ENCODE measurements at regions of chr12 and their contacts with region 1.

Region 1: GRCh38 chr12:30847259-30847658 is 79.3 kb upstream of the TSPAN11 start:
- DNase-seq: peak; percentile 71
- ATAC-seq: no peak
- H3K4me3 ChIP-seq: no peak overlapping the region
- H3K4me3 Mint-ChIP-seq: no peak overlapping the region
- H3K27ac ChIP-seq: no peak overlapping the region
- H3K27ac Mint-ChIP-seq: no peak overlapping the region
- H3K4me1 ChIP-seq: peaks cover 5 to 16% of the 10 kb centered on the region in 2 donors
- H3K4me1 Mint-ChIP-seq: peaks cover 10% of the 10 kb centered on the region
- H3K27me3 ChIP-seq: no peaks in the 10 kb centered on the region
- H3K27me3 Mint-ChIP-seq: peaks cover 8% of the 10 kb centered on the region
- CTCF ChIP-seq: peak; percentile 81

Region 2: GRCh38 chr12:29519585-29520182 is 1327.6 kb before region 1 on chr12:
- CTCF ChIA-PET with region 1: interaction called, 13 read pairs
- POLR2A ChIA-PET with region 1: no interaction called
- intact Hi-C with region 1: loop called (anchors 1 kb)
- DNase-seq: peak; percentile 46
- ATAC-seq: no peak
- H3K4me3 ChIP-seq: no peak overlapping the region
- H3K4me3 Mint-ChIP-seq: no peak overlapping the region
- H3K27ac ChIP-seq: no peak overlapping the region
- H3K27ac Mint-ChIP-seq: no peak overlapping the region
- H3K4me1 ChIP-seq: no peaks in the 10 kb centered on the region
- H3K4me1 Mint-ChIP-seq: no peaks in the 10 kb centered on the region
- H3K27me3 ChIP-seq: no peaks in the 10 kb centered on the region
- H3K27me3 Mint-ChIP-seq: peaks cover 9% of the 10 kb centered on the region
- CTCF ChIP-seq: peak; percentile 70

Region 3: DNA sequence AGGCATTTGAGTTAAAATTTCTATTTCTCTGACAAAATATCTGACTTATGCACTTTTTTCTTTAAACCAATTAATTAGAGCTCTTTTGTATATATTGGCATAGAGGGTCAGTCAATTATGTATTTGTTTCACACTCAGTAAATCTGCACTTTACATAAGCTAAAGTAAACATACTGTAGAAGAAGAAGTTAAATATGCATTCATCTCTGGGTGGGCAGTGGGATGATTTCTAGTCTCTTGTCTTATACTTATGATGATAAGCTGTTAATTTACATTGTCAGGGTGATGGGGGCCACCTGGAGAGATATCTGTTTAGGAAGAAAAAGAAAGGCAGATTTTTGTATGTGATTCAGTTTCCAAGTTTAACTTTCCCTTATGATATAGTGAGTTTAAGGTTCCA is 482.4 kb before region 1 on chr12:
- CTCF ChIA-PET with region 1: no interaction called
- POLR2A ChIA-PET with region 1: no interaction called
- intact Hi-C with region 1: no loop called
- DNase-seq: no peak
- ATAC-seq: no peak
- H3K4me3 ChIP-seq: no peak overlapping the region
- H3K4me3 Mint-ChIP-seq: no peak overlapping the region
- H3K27ac ChIP-seq: no peak overlapping the region
- H3K27ac Mint-ChIP-seq: no peak overlapping the region
- H3K4me1 ChIP-seq: no peaks in the 10 kb centered on the region
- H3K4me1 Mint-ChIP-seq: no peaks in the 10 kb centered on the region
- H3K27me3 ChIP-seq: no peaks in the 10 kb centered on the region
- H3K27me3 Mint-ChIP-seq: no peaks in the 10 kb centered on the region
- CTCF ChIP-seq: no peak

Region 4: GRCh38 chr12:30610711-30611110 is 236.5 kb before region 1 on chr12:
- CTCF ChIA-PET with region 1: no interaction called
- POLR2A ChIA-PET with region 1: no interaction called
- intact Hi-C with region 1: no loop called
- DNase-seq: no peak
- ATAC-seq: no peak
- H3K4me3 ChIP-seq: no peak overlapping the region
- H3K4me3 Mint-ChIP-seq: no peak overlapping the region
- H3K27ac ChIP-seq: no peak overlapping the region
- H3K27ac Mint-ChIP-seq: no peak overlapping the region
- H3K4me1 ChIP-seq: no peaks in the 10 kb centered on the region
- H3K4me1 Mint-ChIP-seq: no peaks in the 10 kb centered on the region
- H3K27me3 ChIP-seq: peaks cover 0 to 4% (median 0%) of the 10 kb centered on the region in 4 experiments
- H3K27me3 Mint-ChIP-seq: peaks cover 4% of the 10 kb centered on the region
- CTCF ChIP-seq: no peak

Region 5: GRCh38 chr12:30754709-30755394 is 92.4 kb before region 1 on chr12 and contains the start of gene CAPRIN2:
- CTCF ChIA-PET with region 1: interaction called, 3 read pairs
- POLR2A ChIA-PET with region 1: no interaction called
- intact Hi-C with region 1: loop called (anchors 1 kb)
- DNase-seq: peak; percentile 95
- ATAC-seq: peak; percentile 88
- H3K4me3 ChIP-seq: peak within 1 kb of the TSS; percentile 49 to 72 (median 71)
- H3K4me3 Mint-ChIP-seq: peak within 1 kb of the TSS; percentile 99
- H3K27ac ChIP-seq: peak within 1 kb of the TSS; percentile 52 to 79
- H3K27ac Mint-ChIP-seq: peak within 1 kb of the TSS; percentile 89
- H3K4me1 ChIP-seq: peaks cover 14 to 15% of the 10 kb centered on the region in 2 donors
- H3K4me1 Mint-ChIP-seq: peaks cover 23% of the 10 kb centered on the region
- H3K27me3 ChIP-seq: no peaks in the 10 kb centered on the region
- H3K27me3 Mint-ChIP-seq: no peaks in the 10 kb centered on the region
- CTCF ChIP-seq: peak; percentile 29
- total RNA-seq, gene CAPRIN2: 55.2 and 57.8 TPM in 2 replicates

Region 6: DNA sequence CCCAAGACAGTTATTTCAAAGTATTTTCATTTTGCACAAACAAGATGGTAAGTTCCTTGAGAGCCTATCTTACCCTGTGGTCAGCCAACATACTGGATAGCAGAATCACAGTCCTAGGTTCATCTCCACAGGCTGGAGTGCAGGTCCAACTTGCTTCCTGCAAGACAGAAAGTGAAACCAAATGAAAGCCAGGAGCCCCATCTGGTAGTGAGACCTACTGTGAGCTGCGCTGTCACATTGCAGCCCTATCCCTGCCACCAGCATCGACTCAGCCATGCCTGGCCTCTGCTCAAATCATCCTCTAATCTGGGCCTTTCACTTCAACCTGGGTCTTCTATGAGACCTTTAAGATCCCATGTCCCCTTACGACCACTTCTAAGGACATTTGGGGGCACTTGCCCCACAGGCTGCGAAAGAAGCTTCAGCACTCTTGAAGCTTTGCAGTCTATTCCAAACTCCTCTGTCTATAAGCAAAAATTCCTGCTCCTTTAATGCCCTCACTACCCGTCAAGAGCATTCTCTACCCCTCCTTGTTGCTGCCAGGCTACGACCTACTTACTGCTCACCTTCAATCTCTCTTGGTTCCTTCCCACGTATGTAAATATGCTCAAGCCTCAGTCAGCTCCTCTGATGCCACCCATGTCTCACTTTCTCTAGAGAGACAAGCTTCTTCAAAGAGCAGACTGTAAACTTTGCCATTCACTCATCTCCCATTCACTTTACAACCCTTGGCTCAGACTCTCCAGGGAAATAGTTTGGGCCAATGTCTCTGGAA is 23.4 kb after region 1 on chr12:
- CTCF ChIA-PET with region 1: no interaction called
- POLR2A ChIA-PET with region 1: no interaction called
- intact Hi-C with region 1: no loop called
- DNase-seq: no peak
- ATAC-seq: no peak
- H3K4me3 ChIP-seq: no peak overlapping the region
- H3K4me3 Mint-ChIP-seq: no peak overlapping the region
- H3K27ac ChIP-seq: no peak overlapping the region
- H3K27ac Mint-ChIP-seq: no peak overlapping the region
- H3K4me1 ChIP-seq: no peaks in the 10 kb centered on the region
- H3K4me1 Mint-ChIP-seq: no peaks in the 10 kb centered on the region
- H3K27me3 ChIP-seq: peaks cover 0 to 8% (median 2%) of the 10 kb centered on the region in 4 experiments
- H3K27me3 Mint-ChIP-seq: peaks cover 22% of the 10 kb centered on the region
- CTCF ChIP-seq: no peak

Region 7: GRCh38 chr12:31117203-31118011 is 270.1 kb after region 1 on chr12:
- CTCF ChIA-PET with region 1: interaction called, 3 read pairs
- POLR2A ChIA-PET with region 1: no interaction called
- intact Hi-C with region 1: loop called (anchors 5 kb)
- DNase-seq: peak; percentile 83
- ATAC-seq: peak; percentile 76
- H3K4me3 ChIP-seq: peak overlapping the region in 4 of 5 experiments; percentile 37 to 65 (median 56)
- H3K4me3 Mint-ChIP-seq: peak overlapping the region; percentile 85
- H3K27ac ChIP-seq: no peak overlapping the region
- H3K27ac Mint-ChIP-seq: peak overlapping the region; percentile 41
- H3K4me1 ChIP-seq: peaks cover 28 to 32% of the 10 kb centered on the region in 2 donors
- H3K4me1 Mint-ChIP-seq: peaks cover 4% of the 10 kb centered on the region
- H3K27me3 ChIP-seq: peaks cover 0 to 34% (median 6%) of the 10 kb centered on the region in 4 experiments
- H3K27me3 Mint-ChIP-seq: peaks cover 2% of the 10 kb centered on the region
- CTCF ChIP-seq: peak; percentile 72

Region 8: GRCh38 chr12:31272607-31273225 is 425.5 kb after region 1 on chr12:
- CTCF ChIA-PET with region 1: interaction called, 45 read pairs
- POLR2A ChIA-PET with region 1: no interaction called
- intact Hi-C with region 1: loop called (anchors 1 kb)
- DNase-seq: no peak
- ATAC-seq: no peak
- H3K4me3 ChIP-seq: no peak overlapping the region
- H3K4me3 Mint-ChIP-seq: no peak overlapping the region
- H3K27ac ChIP-seq: no peak overlapping the region
- H3K27ac Mint-ChIP-seq: no peak overlapping the region
- H3K4me1 ChIP-seq: no peaks in the 10 kb centered on the region
- H3K4me1 Mint-ChIP-seq: peaks cover 3% of the 10 kb centered on the region
- H3K27me3 ChIP-seq: no peaks in the 10 kb centered on the region
- H3K27me3 Mint-ChIP-seq: no peaks in the 10 kb centered on the region
- CTCF ChIP-seq: no peak

Measured in B cell (primary cell).